Lower leg skin (tissue), 4 donors: ENCODE measurements at regions of chr2 and their contacts with region 1.

Region 1: GRCh38 chr2:119085613-119086012 is 72.9 kb downstream of the C1QL2 start:
- DNase-seq: no peak
- H3K4me3 ChIP-seq: no peak overlapping the region
- CTCF ChIP-seq: no peak
- POLR2A ChIP-seq: no peak

Region 2: DNA sequence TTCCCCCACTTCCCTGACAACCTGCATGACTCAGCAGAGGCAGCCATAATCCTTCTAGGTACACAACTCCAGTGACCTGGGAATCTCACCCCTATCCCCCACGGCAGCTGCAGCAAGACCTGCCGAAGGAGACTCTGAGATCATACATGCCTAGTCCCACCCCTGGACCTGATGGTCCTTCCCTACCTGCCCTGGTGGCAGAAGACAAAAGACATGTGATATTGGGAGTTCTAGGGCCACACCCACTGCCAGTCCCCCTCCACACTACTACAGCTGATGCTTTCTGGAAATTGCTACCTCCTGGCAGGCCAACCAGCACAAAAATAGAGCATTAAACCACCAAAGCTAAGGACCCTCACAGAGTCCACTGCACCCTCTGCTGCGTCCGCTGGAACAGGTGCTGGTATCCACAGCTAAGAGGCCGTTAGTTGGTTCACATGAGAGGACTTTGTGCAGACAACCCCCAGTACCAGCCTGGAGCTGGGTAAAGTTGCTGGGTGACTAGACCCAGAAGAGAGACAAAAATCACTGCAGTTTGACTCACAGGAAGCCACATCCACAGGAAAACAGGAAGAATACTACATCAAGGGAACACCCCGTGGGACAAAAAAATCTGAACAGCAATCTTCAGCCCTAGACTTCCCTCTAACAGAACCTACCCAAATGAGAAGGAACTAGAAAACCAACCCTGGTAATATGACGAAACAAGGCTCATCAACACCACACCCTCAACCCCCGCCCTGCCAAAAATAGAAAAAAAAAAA is 131.1 kb before region 1 on chr2:
- intact Hi-C with region 1: no loop called
- DNase-seq: peak in 1 of 2 donors; percentile 72
- H3K4me3 ChIP-seq: no peak overlapping the region
- CTCF ChIP-seq: no peak
- POLR2A ChIP-seq: no peak

Region 3: GRCh38 chr2:119126650-119127049 is 41.0 kb after region 1 on chr2:
- intact Hi-C with region 1: loop called (anchors 1 kb)
- DNase-seq: no peak
- H3K4me3 ChIP-seq: no peak overlapping the region
- CTCF ChIP-seq: no peak
- POLR2A ChIP-seq: no peak

Region 4: DNA sequence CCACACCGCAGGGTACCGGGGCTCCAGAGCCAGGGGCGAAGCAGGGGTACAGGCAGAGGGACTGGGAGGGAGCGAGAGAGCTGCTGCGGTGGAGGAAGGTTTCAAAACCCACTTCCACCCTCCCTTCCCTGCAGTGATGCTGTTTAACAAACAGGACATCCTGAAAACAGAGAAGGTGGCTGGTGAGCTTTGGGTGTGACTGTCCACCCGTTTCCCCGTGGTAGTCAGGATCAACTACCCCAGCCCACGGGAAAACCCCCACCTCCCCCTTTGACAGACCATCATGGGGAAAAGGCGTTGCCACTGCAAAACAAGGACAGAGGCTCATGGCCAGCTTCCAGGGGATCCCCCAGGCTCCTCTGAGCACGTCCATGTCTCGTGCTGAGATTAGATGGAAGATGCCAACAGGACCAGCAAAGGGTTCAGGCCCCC is 1124.7 kb after region 1 on chr2:
- intact Hi-C with region 1: no loop called
- DNase-seq: no peak
- H3K4me3 ChIP-seq: no peak overlapping the region
- CTCF ChIP-seq: no peak
- POLR2A ChIP-seq: no peak

Region 5: GRCh38 chr2:120294008-120294340 is 1208.4 kb after region 1 on chr2:
- intact Hi-C with region 1: no loop called
- DNase-seq: no peak
- H3K4me3 ChIP-seq: no peak overlapping the region
- CTCF ChIP-seq: no peak
- POLR2A ChIP-seq: no peak